Gastrocnemius medialis (tissue), 4 donors: ENCODE measurements at regions of chr12 and their contacts with region 1.

Region 1: DNA sequence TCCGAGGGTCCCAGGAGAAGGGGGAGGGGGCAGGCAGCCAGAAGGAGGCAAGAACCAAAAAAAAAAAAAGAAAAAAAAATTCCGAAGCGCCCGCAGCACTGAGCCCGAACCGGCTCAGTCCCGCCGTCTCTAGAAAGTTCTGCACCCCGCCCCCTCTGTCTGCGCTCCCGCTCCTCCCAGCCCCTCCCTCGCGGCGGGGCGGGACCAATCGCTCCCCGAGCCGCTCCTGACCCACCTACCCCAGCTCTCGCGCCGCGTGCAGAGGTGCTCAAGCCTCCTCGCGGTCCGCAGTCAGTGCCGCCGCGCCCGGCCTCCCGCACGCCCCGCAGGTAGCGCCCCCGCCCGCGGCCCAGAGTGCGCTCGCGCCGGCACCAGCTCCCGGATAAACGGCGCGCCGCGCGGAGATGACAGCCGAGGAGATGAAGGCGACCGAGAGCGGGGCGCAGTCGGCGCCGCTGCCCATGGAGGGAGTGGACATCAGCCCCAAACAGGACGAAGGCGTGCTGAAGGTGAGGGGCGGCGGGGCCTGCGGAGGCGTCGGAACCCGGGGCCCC is at the start of gene FKBP4:
- DNase-seq: peak; percentile 87 to 90
- ATAC-seq: peak; percentile 84
- H3K4me3 ChIP-seq: peak within 1 kb of the TSS; percentile 72 to 84 (median 78)
- H3K27ac ChIP-seq: peak within 1 kb of the TSS; percentile 86 to 92 (median 88)
- H3K4me1 ChIP-seq: peaks cover 21 to 22% of the 10 kb centered on the region in 2 donors
- H3K27me3 ChIP-seq: no peaks in the 10 kb centered on the region
- CTCF ChIP-seq: peak in 1 of 5 experiments; percentile 12
- POLR2A ChIP-seq: peak; percentile 96 to 98
- total RNA-seq, gene FKBP4: 41.9 to 96.0 (median 53.0) TPM

Region 2: GRCh38 chr12:1634590-1635191 is 1160.1 kb before region 1 on chr12:
- in situ Hi-C with region 1: loop called in 1 of 4 experiments (anchors 25 kb)
- intact Hi-C with region 1: no loop called
- DNase-seq: peak; percentile 40 to 61
- ATAC-seq: peak; percentile 61 to 67
- H3K4me3 ChIP-seq: no peak overlapping the region
- H3K27ac ChIP-seq: no peak overlapping the region
- H3K4me1 ChIP-seq: peaks cover 9 to 11% of the 10 kb centered on the region in 2 donors
- H3K27me3 ChIP-seq: peaks cover 21 to 31% (median 23%) of the 10 kb centered on the region in 3 donors
- CTCF ChIP-seq: peak; percentile 51 to 88 (median 65)
- POLR2A ChIP-seq: no peak

Region 3: GRCh38 chr12:2812290-2813213 is 17.7 kb after region 1 on chr12 and contains the start of gene ITFG2:
- in situ Hi-C with region 1: no loop called
- intact Hi-C with region 1: loop called (anchors 1 kb)
- DNase-seq: peak; percentile 96 to 99
- ATAC-seq: peak; percentile 98 to 99
- H3K4me3 ChIP-seq: peak within 1 kb of the TSS; percentile 64 to 92 (median 86)
- H3K27ac ChIP-seq: peak within 1 kb of the TSS; percentile 87 to 96 (median 90)
- H3K4me1 ChIP-seq: peaks cover 18 to 19% of the 10 kb centered on the region in 2 donors
- H3K27me3 ChIP-seq: no peaks in the 10 kb centered on the region
- CTCF ChIP-seq: no peak
- POLR2A ChIP-seq: peak; percentile 62 to 83
- total RNA-seq, gene ITFG2: 5.1 to 7.2 (median 5.9) TPM

Region 4: GRCh38 chr12:3252450-3252891 is 457.7 kb after region 1 on chr12:
- in situ Hi-C with region 1: no loop called
- intact Hi-C with region 1: loop called (anchors 10 kb)
- DNase-seq: peak; percentile 95 to 98
- ATAC-seq: peak; percentile 73 to 85
- H3K4me3 ChIP-seq: peak overlapping the region in 1 of 4 donors; percentile 19
- H3K27ac ChIP-seq: peak overlapping the region; percentile 90 to 97 (median 94)
- H3K4me1 ChIP-seq: peaks cover 78 to 88% of the 10 kb centered on the region in 2 donors
- H3K27me3 ChIP-seq: no peaks in the 10 kb centered on the region
- CTCF ChIP-seq: no peak
- POLR2A ChIP-seq: peak in 1 of 2 donors; percentile 45